H1 (cell line): ENCODE measurements at regions of chr14 and their contacts with region 1.

Region 1: DNA sequence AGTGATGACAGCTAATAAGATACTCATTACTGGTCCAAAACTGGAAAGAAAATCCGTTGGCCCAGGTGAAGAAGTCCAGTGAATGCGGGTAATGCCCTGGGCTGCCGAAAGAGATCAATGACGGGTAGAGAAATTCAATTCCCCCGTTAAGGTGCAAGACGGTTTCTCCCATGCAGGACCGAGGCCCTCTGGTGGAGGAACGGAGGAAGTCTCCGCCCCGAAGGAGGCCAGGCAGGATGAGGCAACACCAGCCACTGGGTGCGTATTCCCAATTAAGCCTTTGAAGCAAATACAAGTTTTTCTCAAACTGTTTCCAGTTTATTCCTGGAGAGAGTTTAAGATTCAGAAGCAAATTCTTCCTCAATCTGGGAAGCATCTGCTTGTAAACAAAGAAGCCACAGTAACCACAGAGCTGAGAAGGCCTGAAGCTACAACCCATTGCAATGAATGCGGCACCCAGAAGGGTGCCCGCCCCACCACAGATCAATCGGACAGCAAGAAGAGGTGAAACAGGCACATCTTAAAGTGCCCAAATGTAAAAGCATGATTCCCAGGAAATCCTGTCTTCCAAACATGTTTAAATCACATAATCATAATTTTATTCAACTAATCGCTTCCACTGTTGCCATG is 118.5 kb downstream of the TTC7B start:
- DNase-seq: peak; percentile 44 to 84
- H3K4me3 ChIP-seq: no peak overlapping the region
- H3K27ac ChIP-seq: no peak overlapping the region
- H3K4me1 ChIP-seq: peaks cover 0 to 4% (median 0%) of the 10 kb centered on the region in 4 experiments; a peak in 2 of 7 replicates
- H3K27me3 ChIP-seq: no peaks in the 10 kb centered on the region
- CTCF ChIP-seq: peak; percentile 91 to 99 (median 97)
- EP300 ChIP-seq: no peak
- POLR2A ChIP-seq: no peak
- RAD21 ChIP-seq: peak; percentile 99

Region 2: DNA sequence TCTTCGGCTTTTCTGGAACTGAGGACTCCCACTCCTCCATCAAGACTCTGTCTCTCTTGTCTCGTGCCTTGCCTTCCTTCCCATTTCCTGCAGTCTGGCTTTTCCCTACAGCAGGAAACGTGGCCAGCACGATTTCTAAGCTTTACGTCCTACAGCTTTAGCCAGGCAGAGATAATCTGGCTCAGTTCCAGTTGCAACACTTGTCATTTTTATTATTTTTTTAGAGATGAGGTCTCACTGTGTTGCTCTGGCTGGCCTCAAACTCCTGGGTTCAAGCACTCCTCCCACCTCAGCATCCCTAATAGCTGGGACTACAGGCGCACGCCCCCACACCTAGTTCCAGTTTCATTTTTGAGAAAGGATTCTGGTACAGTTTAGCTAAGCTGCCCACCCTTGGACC is 281.0 kb before region 1 on chr14:
- CTCF ChIA-PET with region 1: interaction called, 11 read pairs
- POLR2A ChIA-PET with region 1: no interaction called
- DNase-seq: no peak
- H3K4me3 ChIP-seq: no peak overlapping the region
- H3K27ac ChIP-seq: no peak overlapping the region
- H3K4me1 ChIP-seq: no peaks in the 10 kb centered on the region
- H3K27me3 ChIP-seq: no peaks in the 10 kb centered on the region
- CTCF ChIP-seq: no peak
- EP300 ChIP-seq: no peak
- POLR2A ChIP-seq: no peak
- RAD21 ChIP-seq: no peak

Region 3: DNA sequence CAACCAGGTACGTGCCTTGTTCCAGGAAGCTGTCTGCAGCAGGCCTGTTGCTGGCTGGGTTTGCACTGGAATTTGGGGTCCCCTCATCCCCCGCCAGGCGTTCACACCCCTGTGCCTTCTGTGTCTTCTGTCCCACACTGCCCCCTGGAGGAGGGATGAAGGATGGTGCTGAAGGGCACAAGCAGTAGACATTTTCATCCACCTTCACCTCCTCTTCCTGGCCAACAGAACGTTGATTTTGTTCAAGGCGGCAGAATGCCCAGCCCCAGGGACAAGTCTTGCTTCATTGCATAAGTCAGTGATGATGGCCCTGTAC is 178.8 kb before region 1 on chr14:
- CTCF ChIA-PET with region 1: interaction called, 23 read pairs
- POLR2A ChIA-PET with region 1: no interaction called
- DNase-seq: peak in 1 of 2 experiments; percentile 91
- H3K4me3 ChIP-seq: no peak overlapping the region
- H3K27ac ChIP-seq: no peak overlapping the region
- H3K4me1 ChIP-seq: peaks cover 0 to 9% (median 7%) of the 10 kb centered on the region in 4 experiments; a peak in 6 of 7 replicates
- H3K27me3 ChIP-seq: no peaks in the 10 kb centered on the region
- CTCF ChIP-seq: peak; percentile 80 to 97 (median 92)
- EP300 ChIP-seq: no peak
- POLR2A ChIP-seq: no peak
- RAD21 ChIP-seq: peak; percentile 94 to 95

Region 4: GRCh38 chr14:90645842-90646443 is 51.7 kb before region 1 on chr14:
- CTCF ChIA-PET with region 1: interaction called, 21 read pairs
- POLR2A ChIA-PET with region 1: no interaction called
- DNase-seq: peak; percentile 67 to 68
- H3K4me3 ChIP-seq: no peak overlapping the region
- H3K27ac ChIP-seq: no peak overlapping the region
- H3K4me1 ChIP-seq: peaks cover 12 to 26% (median 19%) of the 10 kb centered on the region in 4 experiments
- H3K27me3 ChIP-seq: no peaks in the 10 kb centered on the region
- CTCF ChIP-seq: no peak; a peak in 1 of 4 replicates
- EP300 ChIP-seq: peak; percentile 64 to 67; a peak in 2 of 3 replicates
- POLR2A ChIP-seq: no peak
- RAD21 ChIP-seq: no peak

Region 5: GRCh38 chr14:90681929-90682328 is 15.8 kb before region 1 on chr14:
- CTCF ChIA-PET with region 1: interaction called, 29 read pairs
- POLR2A ChIA-PET with region 1: interaction called, 5 read pairs
- DNase-seq: no peak
- H3K4me3 ChIP-seq: no peak overlapping the region
- H3K27ac ChIP-seq: no peak overlapping the region
- H3K4me1 ChIP-seq: peaks cover 0 to 4% (median 2%) of the 10 kb centered on the region in 4 experiments; a peak in 2 of 7 replicates
- H3K27me3 ChIP-seq: no peaks in the 10 kb centered on the region
- CTCF ChIP-seq: no peak
- EP300 ChIP-seq: no peak
- POLR2A ChIP-seq: no peak
- RAD21 ChIP-seq: no peak

Region 6: GRCh38 chr14:90726656-90727055 is 29.0 kb after region 1 on chr14:
- CTCF ChIA-PET with region 1: interaction called, 38 read pairs
- POLR2A ChIA-PET with region 1: no interaction called
- DNase-seq: no peak
- H3K4me3 ChIP-seq: no peak overlapping the region
- H3K27ac ChIP-seq: no peak overlapping the region
- H3K4me1 ChIP-seq: peaks cover 0 to 3% (median 2%) of the 10 kb centered on the region in 4 experiments; a peak in 2 of 7 replicates
- H3K27me3 ChIP-seq: no peaks in the 10 kb centered on the region
- CTCF ChIP-seq: peak in 1 of 3 experiments; percentile 19; a peak in 1 of 4 replicates
- EP300 ChIP-seq: no peak
- POLR2A ChIP-seq: no peak
- RAD21 ChIP-seq: peak; percentile 44 to 60

Region 7: GRCh38 chr14:90795746-90796145 is 98.1 kb after region 1 on chr14:
- CTCF ChIA-PET with region 1: no interaction called
- POLR2A ChIA-PET with region 1: no interaction called
- DNase-seq: no peak
- H3K4me3 ChIP-seq: no peak overlapping the region
- H3K27ac ChIP-seq: no peak overlapping the region
- H3K4me1 ChIP-seq: peaks cover 0 to 5% (median 0%) of the 10 kb centered on the region in 4 experiments; a peak in 2 of 7 replicates
- H3K27me3 ChIP-seq: no peaks in the 10 kb centered on the region
- CTCF ChIP-seq: peak in 1 of 3 experiments; percentile 16; a peak in 1 of 4 replicates
- EP300 ChIP-seq: no peak
- POLR2A ChIP-seq: no peak
- RAD21 ChIP-seq: no peak